Spleen (tissue), 13 donors: ENCODE measurements at regions of chr7 and their contacts with region 1.

Region 1: GRCh38 chr7:148262721-148263229 is 327.8 kb upstream of the C7orf33 start:
- DNase-seq: peak; percentile 86
- H3K4me3 ChIP-seq: peak overlapping the region in 3 of 8 donors; percentile 7 to 60 (median 23)
- H3K27ac ChIP-seq: no peak overlapping the region
- H3K4me1 ChIP-seq: peaks cover 0 to 27% (median 11%) of the 10 kb centered on the region in 6 donors
- H3K27me3 ChIP-seq: peaks cover 0 to 11% (median 0%) of the 10 kb centered on the region in 7 donors
- CTCF ChIP-seq: peak; percentile 66 to 93 (median 87)
- POLR2A ChIP-seq: no peak

Region 2: GRCh38 chr7:147980826-147981813 is 281.7 kb before region 1 on chr7:
- intact Hi-C with region 1: no loop called
- DNase-seq: no peak
- H3K4me3 ChIP-seq: no peak overlapping the region
- H3K27ac ChIP-seq: no peak overlapping the region
- H3K4me1 ChIP-seq: no peaks in the 10 kb centered on the region
- H3K27me3 ChIP-seq: no peaks in the 10 kb centered on the region
- CTCF ChIP-seq: no peak
- POLR2A ChIP-seq: no peak

Region 3: DNA sequence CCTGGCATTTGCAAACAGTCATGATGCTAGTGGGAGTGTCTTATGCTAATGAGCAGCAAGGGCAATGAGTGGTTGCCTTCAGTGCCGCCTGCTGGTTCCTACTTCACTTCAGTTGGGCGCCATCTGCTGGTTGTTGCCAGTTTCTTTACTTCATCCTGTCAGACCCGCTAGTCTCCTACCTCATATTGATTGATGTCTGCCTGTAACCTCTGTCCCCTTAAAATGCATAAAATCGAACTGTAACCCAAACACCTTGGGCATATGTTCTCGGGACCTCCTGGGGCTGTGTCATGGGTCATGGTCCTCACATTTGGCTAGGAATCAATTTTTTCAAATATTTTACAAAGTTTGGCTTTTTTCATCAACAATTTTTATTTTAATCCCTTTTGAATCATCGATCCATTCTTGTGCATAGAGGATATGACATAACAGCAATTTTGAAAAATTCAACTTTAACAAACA is 265.0 kb after region 1 on chr7:
- intact Hi-C with region 1: loop called (anchors 10 kb)
- DNase-seq: peak; percentile 87
- H3K4me3 ChIP-seq: no peak overlapping the region
- H3K27ac ChIP-seq: no peak overlapping the region
- H3K4me1 ChIP-seq: peaks cover 0 to 6% (median 0%) of the 10 kb centered on the region in 6 donors
- H3K27me3 ChIP-seq: no peaks in the 10 kb centered on the region
- CTCF ChIP-seq: peak; percentile 22 to 78 (median 66)
- POLR2A ChIP-seq: no peak